ENCODE measurements at regions of chr18 and their contacts with region 1.

Region 1: DNA sequence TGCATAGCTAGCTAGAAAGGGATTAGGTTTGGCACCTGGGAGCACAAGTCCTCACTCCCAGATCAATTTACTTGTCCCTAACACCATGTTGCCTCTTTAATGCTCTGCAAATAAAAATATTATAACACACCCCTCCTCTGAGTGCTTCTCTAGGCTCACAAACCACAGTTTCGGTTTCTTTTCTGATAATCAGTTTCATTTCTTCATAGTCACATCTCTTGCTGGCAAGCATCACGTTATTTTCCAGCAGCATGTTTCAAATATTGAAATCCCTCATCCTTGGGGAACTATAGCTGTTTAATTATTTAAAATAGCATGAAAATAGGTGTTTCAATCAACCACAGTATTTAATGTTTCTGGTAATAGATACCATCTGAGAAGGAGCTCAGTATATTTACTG is 13.9 kb upstream of the SMCHD1 start:
- DNase-seq: no peak
- H3K4me3 Mint-ChIP-seq: peak overlapping the region; percentile 50
- H3K27ac Mint-ChIP-seq: peak overlapping the region; percentile 64
- H3K4me1 Mint-ChIP-seq: peaks cover 43% of the 10 kb centered on the region
- H3K27me3 Mint-ChIP-seq: no peaks in the 10 kb centered on the region

Region 2: DNA sequence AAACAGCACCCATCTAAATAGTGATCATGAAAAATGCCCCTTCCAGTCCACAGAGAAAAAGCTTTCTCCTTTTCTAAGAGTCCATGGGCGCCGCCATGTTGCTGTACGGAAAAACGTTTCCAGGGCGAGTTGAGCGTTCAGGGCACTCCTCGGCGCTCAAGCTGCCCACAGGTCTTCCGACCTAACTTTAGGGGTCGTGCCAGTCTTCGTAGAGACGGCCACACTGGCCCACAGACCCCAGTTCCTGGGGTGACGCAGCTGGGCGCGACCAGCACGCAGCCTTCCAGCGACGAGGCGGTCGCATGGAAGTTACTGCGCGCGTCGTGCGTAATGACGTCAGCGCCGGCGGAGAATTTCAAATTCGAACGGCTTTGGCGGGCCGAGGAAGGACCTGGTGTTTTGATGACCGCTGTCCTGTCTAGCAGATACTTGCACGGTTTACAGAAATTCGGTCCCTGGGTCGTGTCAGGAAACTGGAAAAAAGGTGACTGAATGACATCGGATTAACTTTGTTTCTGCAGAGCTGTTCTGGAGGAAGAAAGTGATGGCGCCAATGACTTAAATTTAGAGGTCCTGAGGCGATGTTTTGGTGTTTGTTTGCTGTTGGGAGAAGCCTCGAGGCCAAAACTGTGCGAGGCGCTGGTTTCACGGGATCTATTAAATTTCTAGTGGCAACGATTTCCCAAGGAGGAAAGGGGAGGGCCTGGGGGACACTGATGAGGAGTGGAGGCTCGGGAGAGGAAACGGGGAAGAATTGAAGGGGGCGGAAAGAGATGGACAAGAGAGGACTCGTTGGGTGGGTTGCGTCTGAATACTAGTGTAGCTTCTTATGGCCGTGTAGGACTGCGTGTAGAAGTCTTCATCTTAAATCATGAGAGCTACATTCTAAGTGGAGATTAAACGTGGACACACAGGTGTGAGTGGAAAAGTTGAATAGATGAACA is 70.2 kb before region 1 on chr18 and contains the starts of genes METTL4 and NDC80:
- intact Hi-C with region 1: loop called (anchors 5 kb)
- DNase-seq: peak; percentile 82
- H3K4me3 Mint-ChIP-seq: peak within 1 kb of the TSS; percentile 99
- H3K27ac Mint-ChIP-seq: peak within 1 kb of the TSS; percentile 98
- H3K4me1 Mint-ChIP-seq: peaks cover 52% of the 10 kb centered on the region
- H3K27me3 Mint-ChIP-seq: no peaks in the 10 kb centered on the region
- total RNA-seq, gene METTL4: 17.8 and 18.3 TPM in 2 replicates
- total RNA-seq, gene NDC80: 41.5 and 43.0 TPM in 2 replicates

Region 3: DNA sequence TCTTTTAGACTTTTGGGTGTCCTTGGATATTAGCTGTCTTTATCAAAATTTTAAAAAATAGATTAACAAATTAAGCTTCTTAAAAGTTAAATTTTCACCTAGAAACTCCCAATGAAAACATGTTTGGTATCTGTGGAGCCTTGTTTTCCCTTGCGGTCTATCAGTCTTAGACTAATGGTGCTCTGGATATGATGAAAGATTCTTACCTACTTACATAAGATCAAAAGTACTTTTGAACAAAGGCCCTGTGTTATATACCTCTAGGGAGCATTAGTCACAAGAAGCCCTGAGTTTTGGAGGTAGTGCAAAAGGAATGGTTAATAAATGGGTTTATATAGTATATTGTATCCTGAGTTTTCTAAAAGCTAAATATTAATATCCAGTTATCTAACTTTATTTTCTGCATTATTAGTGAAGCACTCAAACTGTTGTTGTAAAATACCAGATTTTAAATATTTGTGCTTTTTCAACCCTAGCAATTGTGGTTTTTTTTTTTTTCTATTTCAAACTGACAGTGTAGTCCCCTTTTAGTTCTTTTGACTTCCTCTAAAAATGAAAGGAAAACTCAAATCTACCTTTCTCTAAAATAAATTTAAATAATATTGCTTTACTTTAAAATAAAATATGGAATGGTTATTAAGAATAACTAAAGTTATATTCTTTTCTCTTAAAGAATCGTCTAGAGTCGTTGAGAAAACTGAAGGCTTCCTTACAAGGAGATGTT is 52.1 kb before region 1 on chr18:
- intact Hi-C with region 1: loop called (anchors 1 kb)
- DNase-seq: no peak
- H3K4me3 Mint-ChIP-seq: peak overlapping the region; percentile 58
- H3K27ac Mint-ChIP-seq: peak overlapping the region; percentile 84
- H3K4me1 Mint-ChIP-seq: peaks cover 43% of the 10 kb centered on the region
- H3K27me3 Mint-ChIP-seq: no peaks in the 10 kb centered on the region

Region 4: GRCh38 chr18:2627821-2628276 is 13.8 kb before region 1 on chr18:
- intact Hi-C with region 1: loop called (anchors 1 kb)
- DNase-seq: no peak
- H3K4me3 Mint-ChIP-seq: no peak overlapping the region
- H3K27ac Mint-ChIP-seq: peak overlapping the region; percentile 39
- H3K4me1 Mint-ChIP-seq: peaks cover 19% of the 10 kb centered on the region
- H3K27me3 Mint-ChIP-seq: no peaks in the 10 kb centered on the region

Region 5: GRCh38 chr18:2680216-2680792 is 38.7 kb after region 1 on chr18:
- intact Hi-C with region 1: loop called (anchors 2 kb)
- DNase-seq: no peak
- H3K4me3 Mint-ChIP-seq: no peak overlapping the region
- H3K27ac Mint-ChIP-seq: peak overlapping the region; percentile 34
- H3K4me1 Mint-ChIP-seq: peaks cover 43% of the 10 kb centered on the region
- H3K27me3 Mint-ChIP-seq: no peaks in the 10 kb centered on the region